ENCODE measurements at regions of chr17 and their contacts with region 1.

Region 1: DNA sequence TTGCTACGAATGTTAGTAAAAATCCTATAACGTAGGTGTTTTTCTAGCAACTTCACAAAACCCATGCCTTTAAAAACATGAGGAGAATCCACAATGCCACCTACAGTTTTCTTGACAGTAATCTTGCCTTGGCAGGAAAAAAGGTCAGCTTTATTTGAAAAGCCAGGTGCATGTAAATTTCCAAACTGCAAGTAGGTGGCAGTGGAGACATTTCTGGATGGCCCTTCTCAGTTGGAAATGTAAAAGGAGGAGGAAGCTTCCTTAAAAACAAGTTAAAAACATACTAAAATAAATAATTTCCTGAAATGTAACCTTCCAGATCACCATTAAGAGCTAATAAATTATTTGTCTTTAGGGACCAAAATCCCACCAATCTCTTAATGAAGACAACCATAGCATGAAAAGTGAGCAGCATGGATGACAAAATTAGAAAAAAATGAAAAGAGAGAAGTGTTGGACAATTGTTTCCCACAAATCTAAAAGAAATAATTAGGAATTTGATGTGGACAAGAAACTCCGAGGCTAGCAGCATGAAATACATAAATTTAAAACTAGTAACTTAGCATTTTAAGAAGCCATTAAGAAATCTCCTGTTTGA is 152.2 kb downstream of the SNX11 start:
- H3K4me3 ChIP-seq: no peak overlapping the region
- H3K27ac ChIP-seq: no peak overlapping the region
- H3K4me1 ChIP-seq: peaks cover 6% of the 10 kb centered on the region
- CTCF ChIP-seq: peak; percentile 85

Region 2: DNA sequence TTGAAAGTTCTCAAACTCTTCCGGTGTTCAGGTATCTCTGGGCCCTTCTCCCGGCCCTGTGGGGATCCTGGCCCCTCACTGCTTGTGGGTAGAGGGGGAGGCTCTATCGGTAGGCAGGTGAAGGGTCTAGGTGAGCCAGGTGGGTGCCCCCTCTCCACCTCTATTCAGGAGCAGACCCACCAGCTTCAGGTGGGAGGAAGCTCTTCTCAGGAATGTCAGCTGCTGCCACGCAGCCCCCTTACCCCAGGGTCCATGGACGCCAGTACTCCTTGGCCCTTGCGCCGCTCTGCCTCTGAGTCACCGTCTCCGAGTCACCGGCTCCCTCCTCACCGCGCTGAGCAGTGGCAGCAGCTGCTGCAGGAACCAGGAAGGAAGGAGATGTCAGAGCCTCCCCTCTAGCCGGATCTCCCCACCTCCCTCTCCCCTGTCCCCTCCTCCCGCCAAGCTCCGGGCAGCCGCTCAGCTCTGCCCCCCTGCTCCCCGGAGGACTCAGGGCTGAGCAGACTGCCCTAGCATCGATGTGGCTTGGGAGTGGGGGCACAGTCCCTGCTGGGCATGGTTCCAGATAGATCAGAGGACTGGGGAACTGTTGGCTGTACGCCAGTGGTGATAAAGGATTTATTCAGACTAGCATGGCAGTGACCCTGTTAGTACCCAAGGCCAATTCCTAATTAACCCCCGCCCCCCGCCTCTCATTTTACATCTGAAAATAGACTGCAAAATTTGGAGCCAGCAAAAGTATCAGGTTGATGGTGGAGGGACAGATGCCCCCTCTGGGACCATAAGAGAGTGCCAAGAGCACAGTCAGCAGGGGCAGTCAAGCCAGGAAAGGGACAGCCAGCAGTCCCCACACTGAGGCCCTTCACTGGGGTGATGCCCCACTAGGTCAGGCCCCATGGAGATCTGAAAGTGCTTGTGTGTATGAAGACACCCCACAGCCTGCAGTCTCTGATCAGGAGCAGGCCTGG is 438.1 kb before region 1 on chr17 and contains the start of gene OSBPL7:
- CTCF ChIA-PET with region 1: no interaction called
- POLR2A ChIA-PET with region 1: no interaction called
- H3K4me3 ChIP-seq: peak within 1 kb of the TSS; percentile 52
- H3K27ac ChIP-seq: peak within 1 kb of the TSS; percentile 48
- H3K4me1 ChIP-seq: peaks cover 3% of the 10 kb centered on the region
- CTCF ChIP-seq: peak; percentile 92

Region 3: GRCh38 chr17:48194097-48194550 is 65.7 kb before region 1 on chr17:
- CTCF ChIA-PET with region 1: interaction called, 11 read pairs
- POLR2A ChIA-PET with region 1: no interaction called
- H3K4me3 ChIP-seq: no peak overlapping the region
- H3K27ac ChIP-seq: no peak overlapping the region
- H3K4me1 ChIP-seq: peaks cover 17% of the 10 kb centered on the region
- CTCF ChIP-seq: no peak

Region 4: DNA sequence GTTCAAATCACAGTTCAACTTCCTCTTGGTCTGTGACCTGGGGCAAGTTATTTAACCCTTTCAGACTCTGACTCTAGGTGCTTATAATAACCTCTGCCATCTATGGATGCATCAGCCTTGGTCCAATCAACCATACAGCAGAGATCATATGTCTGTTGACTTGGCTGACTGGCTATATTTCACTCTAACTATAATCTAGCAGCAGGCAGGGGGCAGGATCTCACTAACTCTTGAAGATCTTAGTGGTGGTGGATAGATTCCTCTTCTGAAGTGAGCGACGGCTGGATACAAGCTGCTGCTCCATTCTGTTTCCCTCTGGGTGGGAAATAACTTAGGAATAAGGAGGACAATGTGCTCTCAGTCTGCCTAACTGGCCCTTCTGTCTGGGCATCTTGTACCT is 23.6 kb after region 1 on chr17:
- CTCF ChIA-PET with region 1: interaction called, 207 read pairs
- POLR2A ChIA-PET with region 1: no interaction called
- H3K4me3 ChIP-seq: no peak overlapping the region
- H3K27ac ChIP-seq: no peak overlapping the region
- H3K4me1 ChIP-seq: peaks cover 13% of the 10 kb centered on the region
- CTCF ChIP-seq: no peak

Region 5: DNA sequence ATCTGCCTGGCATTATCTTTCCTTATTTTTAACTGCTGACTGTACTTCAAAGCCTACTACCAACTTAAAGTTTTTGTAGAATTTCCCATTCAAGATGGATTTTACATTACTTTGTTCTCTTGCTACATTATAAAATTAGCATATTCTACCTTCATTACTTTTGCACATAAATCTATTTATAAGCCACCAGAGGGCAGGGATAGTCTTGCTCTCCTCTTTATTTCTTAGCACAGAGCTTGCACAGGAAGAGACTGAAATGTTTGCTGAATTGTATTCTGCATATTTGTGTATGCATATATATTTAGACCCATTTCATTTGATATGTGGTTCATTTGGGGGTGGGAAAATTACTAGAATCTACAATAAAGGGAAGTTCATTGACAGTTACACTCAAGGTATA is 62.3 kb after region 1 on chr17:
- CTCF ChIA-PET with region 1: interaction called, 12 read pairs
- POLR2A ChIA-PET with region 1: no interaction called
- H3K4me3 ChIP-seq: no peak overlapping the region
- H3K27ac ChIP-seq: no peak overlapping the region
- H3K4me1 ChIP-seq: 0 out of 2 replicates have a peak, but pooled peaks cover 4% of the 10 kb centered on the region
- CTCF ChIP-seq: 0 out of 2 replicates have a peak, but pooled peaks have one; percentile 8

Region 6: GRCh38 chr17:48586355-48587258 is 326.8 kb after region 1 on chr17:
- CTCF ChIA-PET with region 1: interaction called, 10 read pairs
- POLR2A ChIA-PET with region 1: no interaction called
- H3K4me3 ChIP-seq: peak overlapping the region; percentile 38
- H3K27ac ChIP-seq: peak overlapping the region; percentile 92
- H3K4me1 ChIP-seq: peaks cover 50% of the 10 kb centered on the region
- CTCF ChIP-seq: no peak

Region 7: DNA sequence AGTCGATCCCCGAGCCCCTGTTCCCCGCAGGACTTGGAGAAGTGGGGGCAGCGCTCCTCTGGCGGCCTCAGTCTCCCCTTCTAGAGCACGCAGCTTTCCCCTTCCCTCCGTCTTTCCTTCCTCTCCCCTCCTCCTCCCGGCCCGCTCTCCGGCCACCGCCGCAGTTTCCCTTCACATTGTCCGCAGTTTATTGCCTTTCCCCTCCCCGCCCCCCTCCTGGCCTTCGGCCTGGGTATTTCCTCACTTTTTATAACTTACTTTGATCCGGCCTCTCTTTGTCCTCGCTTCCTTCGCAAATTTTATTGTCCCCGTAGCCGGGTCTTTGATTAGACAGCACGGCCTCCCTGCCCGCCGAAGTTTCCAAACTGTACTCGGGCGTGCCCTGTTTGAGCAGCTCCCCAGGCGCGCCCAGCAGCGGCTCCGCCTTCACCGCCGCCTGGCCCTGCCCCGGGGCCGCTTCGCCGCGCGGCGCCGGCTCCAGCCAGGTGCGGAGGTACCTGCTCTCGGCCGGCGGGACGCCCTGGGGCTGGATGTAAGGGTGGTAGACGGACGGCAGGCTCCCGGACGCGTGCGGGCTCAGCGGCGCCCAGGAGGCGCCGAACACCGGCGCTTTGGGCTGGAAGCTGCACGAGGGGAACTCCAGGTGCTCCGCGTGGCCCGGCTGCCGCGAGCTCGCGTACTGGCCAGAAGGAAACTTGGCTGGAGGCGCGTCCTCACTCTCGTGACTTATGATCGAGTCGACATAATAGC is 365.9 kb after region 1 on chr17:
- CTCF ChIA-PET with region 1: interaction called, 15 read pairs
- POLR2A ChIA-PET with region 1: no interaction called
- H3K4me3 ChIP-seq: peak overlapping the region; percentile 78
- H3K27ac ChIP-seq: peak overlapping the region; percentile 100
- H3K4me1 ChIP-seq: peaks cover 21% of the 10 kb centered on the region
- CTCF ChIP-seq: no peak